GM18951 (cell line): ENCODE measurements at regions of chr7 and their contacts with region 1.

Region 1: DNA sequence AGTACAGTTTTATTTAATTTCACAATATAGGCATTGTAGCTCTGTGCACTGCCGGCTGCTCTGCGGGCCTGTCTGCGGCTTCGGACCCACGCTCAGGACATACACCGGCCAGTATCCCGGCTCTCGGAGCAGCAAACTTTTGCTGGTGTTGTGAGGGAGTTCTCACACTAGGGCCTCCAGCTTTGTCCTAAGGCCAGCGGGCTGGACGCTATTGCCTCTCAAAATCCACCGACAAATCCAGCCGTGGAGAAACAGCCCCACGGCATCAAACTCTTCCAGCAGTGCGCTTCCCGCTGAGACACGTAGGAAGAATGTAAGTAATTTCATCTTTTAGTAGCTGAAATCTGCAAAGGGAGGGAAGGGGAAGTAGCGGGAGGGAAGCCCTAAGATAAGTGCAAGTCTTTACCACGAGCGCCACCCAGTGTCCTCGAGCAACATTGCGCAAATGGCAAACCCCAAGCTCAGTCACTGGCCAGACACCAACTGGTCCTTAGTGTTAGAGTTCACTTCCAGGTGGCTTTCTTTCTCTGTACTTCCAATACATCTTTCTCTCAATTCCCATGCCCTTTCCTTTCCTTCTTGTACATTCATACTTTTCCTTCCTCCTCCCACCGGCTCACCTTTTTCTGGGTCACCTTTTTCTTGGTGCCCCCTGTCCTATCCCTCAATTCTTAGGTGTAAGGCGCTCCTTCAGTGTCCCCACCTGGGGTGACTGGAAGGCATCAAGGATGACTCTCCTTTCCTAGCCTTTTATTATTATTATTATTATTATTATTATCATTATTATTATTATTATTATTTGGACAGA is 3.0 kb upstream of the DLX5 start:
- POLR2A ChIP-seq: no peak

Region 2: GRCh38 chr7:95916573-95917297 is 1110.9 kb before region 1 on chr7:
- in situ Hi-C with region 1: loop called (anchors 25 kb)
- POLR2A ChIP-seq: no peak

Region 3: GRCh38 chr7:96061844-96062243 is 965.8 kb before region 1 on chr7:
- in situ Hi-C with region 1: loop called (anchors 25 kb)
- POLR2A ChIP-seq: no peak

Region 4: DNA sequence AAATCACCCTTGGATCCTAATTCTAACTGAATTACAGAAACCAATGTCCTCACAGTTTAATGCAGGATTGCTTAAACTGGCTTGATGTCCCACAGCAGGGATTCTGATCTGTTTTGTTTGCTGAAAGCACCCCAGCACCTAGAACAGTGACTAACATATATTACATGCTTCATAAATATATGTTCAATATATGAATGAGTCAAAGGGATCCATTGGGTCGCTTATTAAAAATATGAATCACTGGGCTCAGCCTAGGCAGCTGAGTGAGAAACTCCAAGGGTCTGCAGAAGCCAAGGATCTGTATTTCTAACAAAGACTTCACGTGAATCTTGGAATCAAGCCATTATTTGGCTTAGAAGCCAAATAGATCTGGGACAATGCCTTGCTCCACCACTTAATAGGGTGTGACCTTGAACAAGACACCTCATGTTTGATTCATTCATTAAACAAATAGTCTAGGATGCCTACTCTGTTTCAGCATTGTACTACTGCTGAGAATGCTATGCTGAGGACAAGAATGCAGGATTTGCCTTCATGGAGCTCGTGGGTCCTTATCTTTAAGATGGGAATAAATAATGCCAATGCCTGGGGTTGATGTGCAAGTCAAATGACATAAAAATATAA is 125.7 kb before region 1 on chr7:
- in situ Hi-C with region 1: no loop called
- POLR2A ChIP-seq: no peak